ENCODE measurements at regions of chr19 and their contacts with region 1.

Region 1: DNA sequence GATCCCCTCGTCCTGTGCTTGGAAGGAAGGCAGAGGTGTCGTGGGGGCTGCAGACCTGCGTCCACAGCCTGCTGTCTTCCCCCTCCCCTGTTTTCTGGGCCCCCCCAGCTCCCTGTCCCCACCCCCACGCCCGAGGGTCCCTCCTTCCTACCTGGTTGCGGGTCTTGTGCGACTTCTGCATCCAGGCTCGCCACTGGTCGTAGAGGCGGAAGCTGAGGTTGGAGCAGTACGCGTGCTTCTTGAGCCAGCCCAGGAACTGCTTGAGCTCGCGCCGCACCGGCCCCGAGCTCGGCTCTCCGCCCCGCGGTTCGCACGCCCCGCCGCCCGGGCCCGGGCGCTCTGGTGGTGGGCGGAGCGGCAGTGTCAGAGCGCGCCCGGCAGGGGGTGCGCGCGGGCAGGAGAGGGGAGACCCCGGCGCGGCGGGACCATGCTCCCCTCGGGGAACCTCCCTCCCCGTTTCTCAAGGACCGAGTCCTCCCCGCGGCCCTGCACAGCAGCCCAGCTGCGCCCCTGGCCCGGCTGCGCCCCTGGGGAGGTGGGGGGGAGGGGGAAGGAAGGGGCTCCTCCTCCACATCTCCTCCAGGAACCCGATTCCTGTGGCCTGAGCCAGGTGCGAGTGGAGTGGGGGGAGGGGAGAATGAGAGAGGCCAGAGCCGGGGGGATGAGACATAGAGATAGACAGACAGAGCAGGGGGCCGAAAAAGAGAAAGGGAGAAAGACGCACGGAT is 5.7 kb downstream of the REX1BD start:
- DNase-seq: peak; percentile 82
- ATAC-seq: peak; percentile 34
- H3K4me3 Mint-ChIP-seq: peak overlapping the region; percentile 77
- H3K27ac Mint-ChIP-seq: peak overlapping the region; percentile 94
- H3K4me1 Mint-ChIP-seq: peaks cover 53% of the 10 kb centered on the region
- H3K27me3 Mint-ChIP-seq: peaks cover 4% of the 10 kb centered on the region
- CTCF ChIP-seq: peak; percentile 63

Region 2: DNA sequence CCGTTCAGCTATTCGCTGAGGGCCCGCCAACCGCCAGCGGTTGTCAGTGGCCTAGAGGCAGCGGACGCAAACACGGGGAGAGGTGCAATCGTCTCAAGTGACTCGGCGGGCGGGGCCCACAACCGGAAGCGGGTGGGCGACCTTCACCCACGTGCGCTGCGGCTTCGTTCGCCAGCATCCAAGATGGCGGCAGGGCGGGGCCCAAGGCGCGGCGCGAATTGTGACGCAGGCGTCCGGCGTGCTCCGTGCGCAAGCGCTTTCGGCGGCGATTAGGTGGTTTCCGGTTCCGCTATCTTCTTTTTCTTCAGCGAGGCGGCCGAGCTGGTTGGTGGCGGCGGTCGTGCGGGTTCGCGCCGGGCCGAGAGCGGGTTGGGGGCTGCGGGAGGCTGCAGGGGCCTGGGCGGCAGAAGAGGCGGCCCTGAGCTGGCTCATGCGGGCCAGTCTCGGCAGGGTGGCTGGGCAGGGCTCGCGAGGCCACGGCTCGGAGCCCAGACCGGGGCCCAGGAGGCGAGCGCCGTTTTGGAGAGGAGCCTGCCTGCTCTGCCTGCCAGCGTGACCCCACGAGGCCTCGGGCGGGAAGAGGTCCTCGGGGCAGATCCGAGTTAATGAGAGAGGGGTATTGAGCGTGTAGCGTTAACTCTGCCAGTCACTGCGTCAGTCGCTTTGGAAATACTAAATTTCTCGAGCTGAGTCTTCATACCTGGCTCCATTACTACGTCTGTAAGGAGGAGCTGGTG is 22.5 kb before region 1 on chr19 and contains the start of gene UBA52:
- CTCF ChIA-PET with region 1: interaction called, 34 read pairs
- POLR2A ChIA-PET with region 1: interaction called, 18 read pairs
- DNase-seq: peak; percentile 99
- ATAC-seq: peak; percentile 92
- H3K4me3 Mint-ChIP-seq: peak within 1 kb of the TSS; percentile 76
- H3K27ac Mint-ChIP-seq: peak within 1 kb of the TSS; percentile 98
- H3K4me1 Mint-ChIP-seq: peaks cover 16% of the 10 kb centered on the region
- H3K27me3 Mint-ChIP-seq: no peaks in the 10 kb centered on the region
- CTCF ChIP-seq: no peak
- total RNA-seq, gene UBA52: 1,300 to 1,361 TPM (median 1,328 TPM) in 3 replicates

Region 3: GRCh38 chr19:18612772-18613588 is 18.7 kb after region 1 on chr19 and contains the start of gene TMEM59L:
- CTCF ChIA-PET with region 1: interaction called, 14 read pairs
- POLR2A ChIA-PET with region 1: interaction called, 8 read pairs
- DNase-seq: peak; percentile 60
- ATAC-seq: no peak; the same call in 1 of the 2 replicates
- H3K4me3 Mint-ChIP-seq: peak within 1 kb of the TSS; percentile 80
- H3K27ac Mint-ChIP-seq: no peak within 1 kb of the TSS
- H3K4me1 Mint-ChIP-seq: peaks cover 38% of the 10 kb centered on the region
- H3K27me3 Mint-ChIP-seq: peaks cover 78% of the 10 kb centered on the region
- CTCF ChIP-seq: no peak
- total RNA-seq, gene TMEM59L: 14.8 to 30.0 TPM (median 27.3 TPM) in 3 replicates

Region 4: DNA sequence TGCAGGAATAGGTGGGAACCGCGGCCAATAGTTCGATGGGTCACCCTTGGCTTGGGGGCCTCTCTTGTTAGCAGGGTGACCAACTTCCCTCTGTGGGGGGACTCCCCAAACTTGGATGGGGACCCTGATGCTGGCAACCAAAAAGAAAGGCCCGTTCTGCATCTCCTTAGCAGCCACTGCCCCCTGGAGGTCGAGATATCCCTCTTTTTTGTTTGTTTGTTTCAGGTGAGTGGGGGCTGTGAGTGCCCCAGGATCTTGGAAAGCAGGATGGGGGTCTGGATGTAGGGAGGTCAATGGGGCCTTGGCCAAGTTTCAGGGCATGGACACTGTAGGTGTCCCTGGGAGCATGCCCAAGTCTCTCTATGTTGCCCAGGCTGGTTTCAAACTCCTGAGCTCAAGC is 81.5 kb after region 1 on chr19:
- CTCF ChIA-PET with region 1: interaction called, 39 read pairs
- POLR2A ChIA-PET with region 1: interaction called, 3 read pairs
- DNase-seq: peak; percentile 65
- ATAC-seq: peak; percentile 26
- H3K4me3 Mint-ChIP-seq: no peak overlapping the region
- H3K27ac Mint-ChIP-seq: no peak overlapping the region
- H3K4me1 Mint-ChIP-seq: peaks cover 18% of the 10 kb centered on the region
- H3K27me3 Mint-ChIP-seq: no peaks in the 10 kb centered on the region
- CTCF ChIP-seq: peak; percentile 45; the same call in 1 of the 2 replicates

Region 5: GRCh38 chr19:18746401-18747325 is 152.4 kb after region 1 on chr19:
- CTCF ChIA-PET with region 1: interaction called, 12 read pairs
- POLR2A ChIA-PET with region 1: no interaction called
- DNase-seq: peak; percentile 55
- ATAC-seq: peak; percentile 81
- H3K4me3 Mint-ChIP-seq: no peak overlapping the region
- H3K27ac Mint-ChIP-seq: no peak overlapping the region; the same call in 1 of the 2 replicates
- H3K4me1 Mint-ChIP-seq: peaks cover 9% of the 10 kb centered on the region
- H3K27me3 Mint-ChIP-seq: no peaks in the 10 kb centered on the region
- CTCF ChIP-seq: no peak

Region 6: DNA sequence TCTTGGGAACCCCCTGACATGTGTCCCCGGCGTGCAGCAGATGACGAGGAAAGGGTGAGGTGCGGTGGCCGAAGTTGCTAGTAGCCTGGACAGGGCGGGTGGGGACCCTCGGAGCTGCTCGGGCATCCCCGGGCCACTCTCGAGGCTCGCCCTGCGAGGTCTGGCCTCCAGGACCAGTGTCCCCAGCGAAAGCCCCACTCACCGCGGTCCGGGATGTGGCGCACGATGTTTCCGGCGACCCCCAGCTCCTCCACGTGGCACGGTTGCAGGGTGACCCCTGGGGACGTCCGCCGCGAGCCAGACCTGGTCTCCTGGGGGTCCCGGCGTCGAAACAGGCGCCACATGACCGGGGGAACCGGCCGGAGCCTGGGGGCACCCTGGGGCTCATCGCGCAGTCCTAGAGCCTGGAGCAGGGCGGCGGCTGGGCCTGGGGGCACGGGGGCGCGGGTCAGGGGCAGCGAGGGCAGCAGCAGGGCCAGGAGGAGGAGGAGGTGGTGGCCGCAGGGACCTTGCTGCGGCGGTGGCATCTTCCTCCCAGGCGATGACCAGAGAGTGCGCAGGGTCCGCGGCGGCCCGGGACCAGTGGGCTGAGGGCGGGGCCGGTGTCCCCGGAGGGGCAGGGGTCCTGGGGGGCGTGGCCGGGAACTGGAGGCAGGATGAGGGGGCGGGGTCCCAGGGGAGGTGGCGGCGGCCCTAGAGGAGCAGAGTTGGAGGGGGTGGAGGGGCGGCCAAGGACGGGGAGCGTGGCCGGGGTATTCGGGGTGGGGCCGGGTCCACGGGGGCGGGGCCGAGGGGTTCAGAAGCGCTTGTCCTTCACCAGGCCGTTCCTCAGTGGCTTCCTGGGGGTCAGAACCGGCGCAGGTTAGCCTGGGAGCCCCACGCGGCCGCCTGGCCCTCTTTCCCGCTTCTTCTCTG is 275.8 kb after region 1 on chr19:
- CTCF ChIA-PET with region 1: no interaction called
- POLR2A ChIA-PET with region 1: no interaction called
- DNase-seq: peak; percentile 83
- ATAC-seq: peak; percentile 62
- H3K4me3 Mint-ChIP-seq: peak overlapping the region; percentile 57
- H3K27ac Mint-ChIP-seq: no peak overlapping the region
- H3K4me1 Mint-ChIP-seq: peaks cover 14% of the 10 kb centered on the region
- H3K27me3 Mint-ChIP-seq: peaks cover 26% of the 10 kb centered on the region
- CTCF ChIP-seq: no peak

Measured in WTC11 (cell line).